GM12878 (cell line): ENCODE measurements at regions of chr11 and their contacts with region 1.

Region 1: GRCh38 chr11:116073854-116074837 is 569.9 kb upstream of the CADM1 start:
- DNase-seq: peak; percentile 82
- ATAC-seq: peak; percentile 93
- H3K4me3 ChIP-seq: 0 out of 2 replicates have a peak overlapping the region, but pooled peaks have one; percentile 21
- H3K27ac ChIP-seq: peak overlapping the region; percentile 79
- H3K4me1 ChIP-seq: peaks cover 23% of the 10 kb centered on the region
- H3K27me3 ChIP-seq: no peaks in the 10 kb centered on the region
- CTCF ChIP-seq: peak in 1 of 3 experiments; percentile 17; a peak in 1 of 6 replicates
- EP300 ChIP-seq: peak; percentile 95 to 97
- POLR2A ChIP-seq: no peak; the same call in 1 of the 2 replicates
- RAD21 ChIP-seq: peak; percentile 9; the same call in 1 of the 2 replicates

Region 2: GRCh38 chr11:115869780-115870431 is 204.2 kb before region 1 on chr11:
- CTCF ChIA-PET with region 1: interaction called, 99 read pairs
- POLR2A ChIA-PET with region 1: interaction called, 5 read pairs
- RAD21 ChIA-PET with region 1: interaction called, 46 read pairs
- SMC1A ChIA-PET with region 1: interaction called, 69 read pairs
- in situ Hi-C with region 1: no loop called
- intact Hi-C with region 1: loop called (anchors 2 kb)
- DNase-seq: peak; percentile 51
- ATAC-seq: peak; percentile 87
- H3K4me3 ChIP-seq: no peak overlapping the region
- H3K27ac ChIP-seq: no peak overlapping the region
- H3K4me1 ChIP-seq: peaks cover 49% of the 10 kb centered on the region
- H3K27me3 ChIP-seq: no peaks in the 10 kb centered on the region
- CTCF ChIP-seq: peak; percentile 80 to 90 (median 85)
- EP300 ChIP-seq: peak in 1 of 2 experiments; percentile 24; a peak in 1 of 4 replicates
- POLR2A ChIP-seq: no peak
- RAD21 ChIP-seq: peak; percentile 77

Region 3: DNA sequence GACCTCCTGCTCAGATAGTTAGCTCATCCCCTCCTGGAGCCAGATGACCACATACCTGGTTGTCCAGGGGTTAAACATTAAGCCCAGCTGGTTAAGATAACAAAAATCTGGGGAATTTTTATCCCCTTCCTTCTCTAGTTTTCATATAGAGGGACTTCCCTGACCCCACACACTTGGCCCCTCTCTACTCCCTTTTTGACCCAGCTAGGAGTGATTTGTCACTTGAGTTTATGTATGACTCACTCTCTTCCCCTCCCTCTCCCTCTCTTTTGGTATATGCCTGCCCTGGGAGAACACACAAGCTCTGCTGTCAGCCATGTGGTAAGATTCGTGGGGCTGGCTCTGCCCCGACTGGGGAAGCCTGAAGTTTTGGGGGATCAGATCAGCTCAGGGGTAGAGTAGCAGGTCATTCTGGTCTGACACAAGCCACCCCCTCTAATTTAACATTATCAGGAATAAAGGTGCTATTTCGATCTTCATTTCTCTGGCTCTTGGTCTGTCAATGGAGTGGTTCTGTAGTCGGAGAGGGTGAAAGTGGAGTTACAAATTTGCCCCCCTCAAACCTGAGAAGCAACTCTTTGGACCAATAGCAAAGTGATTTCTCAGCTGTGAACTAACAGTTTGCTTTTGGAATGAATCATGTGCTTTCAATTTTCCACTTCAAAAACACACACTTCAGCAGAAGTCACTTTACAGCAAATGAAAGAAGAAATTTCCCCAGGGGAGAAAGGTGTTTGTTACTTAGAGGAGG is 154.6 kb before region 1 on chr11:
- CTCF ChIA-PET with region 1: interaction called, 19 read pairs
- POLR2A ChIA-PET with region 1: interaction called, 42 read pairs
- RAD21 ChIA-PET with region 1: interaction called, 222 read pairs
- SMC1A ChIA-PET with region 1: interaction called, 249 read pairs
- in situ Hi-C with region 1: no loop called
- intact Hi-C with region 1: no loop called
- DNase-seq: peak; percentile 91
- ATAC-seq: peak; percentile 66
- H3K4me3 ChIP-seq: peak overlapping the region; percentile 15; the same call in 1 of the 2 replicates
- H3K27ac ChIP-seq: peak overlapping the region; percentile 94
- H3K4me1 ChIP-seq: peaks cover 70% of the 10 kb centered on the region
- H3K27me3 ChIP-seq: no peaks in the 10 kb centered on the region
- CTCF ChIP-seq: no peak
- EP300 ChIP-seq: peak; percentile 92 to 93; a peak in 3 of 4 replicates
- POLR2A ChIP-seq: peak; percentile 70
- RAD21 ChIP-seq: peak; percentile 12; the same call in 1 of the 2 replicates

Region 4: GRCh38 chr11:115930886-115931547 is 143.1 kb before region 1 on chr11:
- CTCF ChIA-PET with region 1: interaction called, 65 read pairs
- POLR2A ChIA-PET with region 1: interaction called, 42 read pairs
- RAD21 ChIA-PET with region 1: interaction called, 222 read pairs
- SMC1A ChIA-PET with region 1: interaction called, 249 read pairs
- in situ Hi-C with region 1: loop called (anchors 5 kb)
- intact Hi-C with region 1: no loop called
- DNase-seq: no peak
- ATAC-seq: peak; percentile 56
- H3K4me3 ChIP-seq: no peak overlapping the region
- H3K27ac ChIP-seq: peak overlapping the region; percentile 95
- H3K4me1 ChIP-seq: peaks cover 59% of the 10 kb centered on the region
- H3K27me3 ChIP-seq: no peaks in the 10 kb centered on the region
- CTCF ChIP-seq: no peak
- EP300 ChIP-seq: no peak; a peak in 1 of 4 replicates
- POLR2A ChIP-seq: no peak
- RAD21 ChIP-seq: no peak

Region 5: GRCh38 chr11:115990004-115990447 is 84.1 kb before region 1 on chr11:
- CTCF ChIA-PET with region 1: interaction called, 66 read pairs
- POLR2A ChIA-PET with region 1: no interaction called
- RAD21 ChIA-PET with region 1: interaction called, 17 read pairs
- SMC1A ChIA-PET with region 1: interaction called, 96 read pairs
- in situ Hi-C with region 1: no loop called
- intact Hi-C with region 1: no loop called
- DNase-seq: no peak
- ATAC-seq: peak; percentile 91
- H3K4me3 ChIP-seq: no peak overlapping the region
- H3K27ac ChIP-seq: no peak overlapping the region
- H3K4me1 ChIP-seq: no peaks in the 10 kb centered on the region
- H3K27me3 ChIP-seq: no peaks in the 10 kb centered on the region
- CTCF ChIP-seq: peak; percentile 60 to 81 (median 62); a peak in 5 of 6 replicates
- EP300 ChIP-seq: no peak
- POLR2A ChIP-seq: no peak
- RAD21 ChIP-seq: peak; percentile 56

Region 6: DNA sequence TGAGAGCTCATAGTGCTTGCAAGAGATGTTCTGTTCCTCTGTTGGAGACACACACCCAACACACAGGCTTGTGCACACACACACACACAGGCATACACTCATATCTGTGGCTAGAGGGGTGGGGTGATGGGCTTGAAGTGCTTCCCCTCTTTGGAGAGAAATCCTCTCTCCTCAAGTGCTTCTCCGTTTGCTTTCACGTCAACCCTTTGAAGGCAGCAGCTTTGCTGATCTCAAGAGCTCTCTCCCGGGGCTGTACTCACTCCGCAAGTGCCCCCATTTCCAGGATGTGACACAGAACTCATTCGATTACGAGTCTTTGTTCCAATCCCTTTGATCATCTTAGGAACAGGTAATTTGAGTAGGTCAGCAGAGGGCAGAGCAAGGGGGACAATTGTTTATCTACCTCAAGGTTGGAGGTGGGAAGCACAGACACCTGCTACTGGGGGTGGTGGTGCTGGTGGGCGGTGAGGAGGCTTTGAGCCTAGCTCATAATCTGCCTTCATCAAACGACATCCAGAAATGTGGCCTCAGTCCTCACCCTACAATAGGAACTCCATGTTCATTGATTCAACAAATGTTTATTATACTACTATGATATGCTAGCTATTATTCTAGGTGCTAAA is 40.1 kb before region 1 on chr11:
- CTCF ChIA-PET with region 1: interaction called, 4 read pairs
- POLR2A ChIA-PET with region 1: no interaction called
- RAD21 ChIA-PET with region 1: interaction called, 6 read pairs
- SMC1A ChIA-PET with region 1: interaction called, 10 read pairs
- in situ Hi-C with region 1: no loop called
- intact Hi-C with region 1: no loop called
- DNase-seq: no peak
- ATAC-seq: no peak
- H3K4me3 ChIP-seq: no peak overlapping the region
- H3K27ac ChIP-seq: no peak overlapping the region
- H3K4me1 ChIP-seq: peaks cover 6% of the 10 kb centered on the region; the same call in 1 of the 2 replicates
- H3K27me3 ChIP-seq: no peaks in the 10 kb centered on the region
- CTCF ChIP-seq: no peak
- EP300 ChIP-seq: no peak
- POLR2A ChIP-seq: no peak
- RAD21 ChIP-seq: no peak

Region 7: GRCh38 chr11:116130122-116130521 is 56.0 kb after region 1 on chr11:
- CTCF ChIA-PET with region 1: no interaction called
- POLR2A ChIA-PET with region 1: no interaction called
- RAD21 ChIA-PET with region 1: no interaction called
- SMC1A ChIA-PET with region 1: no interaction called
- in situ Hi-C with region 1: no loop called
- intact Hi-C with region 1: loop called (anchors 5 kb)
- DNase-seq: no peak
- ATAC-seq: peak; percentile 81
- H3K4me3 ChIP-seq: no peak overlapping the region
- H3K27ac ChIP-seq: no peak overlapping the region
- H3K4me1 ChIP-seq: no peaks in the 10 kb centered on the region
- H3K27me3 ChIP-seq: no peaks in the 10 kb centered on the region; a peak in 1 of 4 replicates
- CTCF ChIP-seq: no peak
- EP300 ChIP-seq: no peak
- POLR2A ChIP-seq: no peak
- RAD21 ChIP-seq: no peak